HEK293 (cell line): ENCODE measurements at regions of chr1 and their contacts with region 1.

Region 1: DNA sequence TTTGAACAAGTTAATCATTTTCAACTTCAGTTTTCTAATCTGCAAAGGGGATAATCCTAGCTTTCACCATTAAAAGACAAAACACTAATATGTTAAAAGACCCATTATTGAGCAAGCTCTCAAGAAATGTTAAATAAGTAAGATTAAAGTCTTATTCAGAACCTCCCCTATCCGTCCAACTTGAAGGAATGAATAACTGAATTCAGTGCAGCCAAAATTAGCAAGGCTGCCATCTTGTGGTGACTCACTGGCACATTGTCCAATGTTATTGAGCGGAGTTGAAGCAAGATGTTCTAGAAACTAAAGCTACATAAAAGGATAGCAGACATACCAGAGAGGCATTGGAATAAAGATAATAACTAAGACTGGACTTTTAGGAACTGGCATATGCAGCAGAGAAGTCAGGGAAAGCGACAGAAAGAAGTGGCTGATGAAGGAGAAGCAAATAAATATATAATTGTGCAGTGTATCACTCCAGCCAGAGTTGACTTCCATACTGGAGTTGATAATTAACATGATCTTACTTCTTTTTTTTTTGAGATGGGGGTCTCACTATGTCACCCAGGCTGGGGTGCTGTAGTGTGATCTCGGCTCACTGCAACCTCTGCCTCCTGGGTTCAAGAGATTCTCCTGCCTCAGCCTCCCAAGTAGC is 8.2 kb upstream of the CAP1 start:
- H3K4me3 ChIP-seq: no peak overlapping the region
- H3K27ac ChIP-seq: no peak overlapping the region
- H3K4me1 ChIP-seq: no peaks in the 10 kb centered on the region
- CTCF ChIP-seq: 0 out of 2 replicates have a peak, but pooled peaks have one; percentile 28

Region 2: GRCh38 chr1:39816415-39817090 is 215.8 kb before region 1 on chr1:
- CTCF ChIA-PET with region 1: interaction called, 29 read pairs
- POLR2A ChIA-PET with region 1: no interaction called
- H3K4me3 ChIP-seq: no peak overlapping the region
- H3K27ac ChIP-seq: no peak overlapping the region
- H3K4me1 ChIP-seq: no peaks in the 10 kb centered on the region
- CTCF ChIP-seq: peak; percentile 76

Region 3: DNA sequence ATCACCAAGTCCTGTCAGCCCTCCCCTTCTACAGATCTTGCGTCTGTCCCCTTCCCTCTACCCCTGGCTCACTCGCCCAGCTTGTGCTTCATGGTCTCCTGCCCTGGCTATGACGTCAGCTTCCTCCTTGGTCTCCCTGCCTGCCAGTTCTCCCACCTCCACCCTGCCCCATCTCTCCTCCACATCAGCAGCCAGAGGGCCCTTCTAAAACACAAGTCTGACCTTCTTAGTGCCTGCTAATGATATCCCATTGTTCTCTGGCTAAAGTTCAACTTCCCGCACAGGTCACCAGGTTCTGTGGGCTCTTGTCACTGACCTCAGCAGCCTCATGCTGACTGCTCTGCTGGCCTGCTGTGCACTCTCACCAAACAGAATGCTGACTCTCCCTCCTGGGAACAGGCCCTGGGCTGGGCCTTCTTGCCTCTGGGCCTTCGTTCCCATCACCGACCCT is 106.0 kb before region 1 on chr1:
- CTCF ChIA-PET with region 1: interaction called, 131 read pairs
- POLR2A ChIA-PET with region 1: no interaction called
- H3K4me3 ChIP-seq: no peak overlapping the region
- H3K27ac ChIP-seq: no peak overlapping the region
- H3K4me1 ChIP-seq: no peaks in the 10 kb centered on the region
- CTCF ChIP-seq: no peak

Region 4: DNA sequence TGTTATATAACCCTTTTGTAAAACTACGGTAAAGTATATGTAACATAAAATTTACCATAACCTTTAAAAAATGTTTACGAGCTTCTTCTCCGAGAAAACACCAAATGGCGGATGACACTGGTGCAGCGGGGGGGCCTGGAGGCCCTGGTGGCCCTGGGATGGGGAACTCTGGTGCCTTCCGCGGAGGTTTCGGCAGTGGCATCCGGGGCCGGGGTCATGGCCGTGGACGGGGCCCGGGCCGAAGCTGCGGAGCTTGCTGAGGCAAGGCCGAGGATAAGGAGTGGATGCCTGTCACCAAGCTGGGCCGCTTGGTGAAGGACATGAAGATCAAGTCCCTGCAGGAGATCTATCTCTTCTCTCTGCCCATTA is 69.9 kb before region 1 on chr1:
- CTCF ChIA-PET with region 1: no interaction called
- POLR2A ChIA-PET with region 1: no interaction called
- H3K4me3 ChIP-seq: no peak overlapping the region
- H3K27ac ChIP-seq: no peak overlapping the region
- H3K4me1 ChIP-seq: no peaks in the 10 kb centered on the region
- CTCF ChIP-seq: no peak

Region 5: GRCh38 chr1:40014812-40015594 is 17.4 kb before region 1 on chr1:
- CTCF ChIA-PET with region 1: interaction called, 15 read pairs
- POLR2A ChIA-PET with region 1: no interaction called
- H3K4me3 ChIP-seq: no peak overlapping the region
- H3K27ac ChIP-seq: no peak overlapping the region
- H3K4me1 ChIP-seq: no peaks in the 10 kb centered on the region
- CTCF ChIP-seq: no peak

Region 6: GRCh38 chr1:40049725-40050124 is 17.4 kb after region 1 on chr1:
- CTCF ChIA-PET with region 1: interaction called, 17 read pairs
- POLR2A ChIA-PET with region 1: interaction called, 4 read pairs
- H3K4me3 ChIP-seq: no peak overlapping the region
- H3K27ac ChIP-seq: no peak overlapping the region
- H3K4me1 ChIP-seq: no peaks in the 10 kb centered on the region
- CTCF ChIP-seq: no peak

Region 7: DNA sequence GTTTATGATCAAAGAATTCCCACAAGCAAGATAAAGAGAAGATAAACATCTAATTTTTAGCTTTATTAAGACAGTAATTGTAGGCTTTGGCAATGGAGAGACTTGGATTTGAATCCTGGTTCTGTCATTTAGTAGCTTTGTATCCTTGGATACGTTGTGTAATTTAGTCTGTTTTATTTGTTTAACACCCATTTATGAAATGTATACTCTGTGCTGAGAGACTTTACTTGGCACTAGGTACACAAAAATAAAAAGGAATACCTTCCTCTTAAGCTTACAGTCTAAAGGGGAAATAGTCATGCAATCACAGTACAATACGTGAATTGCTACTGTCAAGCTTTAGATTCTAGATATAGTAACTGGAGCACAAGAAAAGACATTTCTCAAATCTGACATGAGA is 249.5 kb after region 1 on chr1:
- CTCF ChIA-PET with region 1: no interaction called
- POLR2A ChIA-PET with region 1: no interaction called
- H3K4me3 ChIP-seq: no peak overlapping the region
- H3K27ac ChIP-seq: no peak overlapping the region
- H3K4me1 ChIP-seq: no peaks in the 10 kb centered on the region
- CTCF ChIP-seq: no peak